Endothelial cell of umbilical vein (primary cell): ENCODE measurements at regions of chr6 and their contacts with region 1.

Region 1: DNA sequence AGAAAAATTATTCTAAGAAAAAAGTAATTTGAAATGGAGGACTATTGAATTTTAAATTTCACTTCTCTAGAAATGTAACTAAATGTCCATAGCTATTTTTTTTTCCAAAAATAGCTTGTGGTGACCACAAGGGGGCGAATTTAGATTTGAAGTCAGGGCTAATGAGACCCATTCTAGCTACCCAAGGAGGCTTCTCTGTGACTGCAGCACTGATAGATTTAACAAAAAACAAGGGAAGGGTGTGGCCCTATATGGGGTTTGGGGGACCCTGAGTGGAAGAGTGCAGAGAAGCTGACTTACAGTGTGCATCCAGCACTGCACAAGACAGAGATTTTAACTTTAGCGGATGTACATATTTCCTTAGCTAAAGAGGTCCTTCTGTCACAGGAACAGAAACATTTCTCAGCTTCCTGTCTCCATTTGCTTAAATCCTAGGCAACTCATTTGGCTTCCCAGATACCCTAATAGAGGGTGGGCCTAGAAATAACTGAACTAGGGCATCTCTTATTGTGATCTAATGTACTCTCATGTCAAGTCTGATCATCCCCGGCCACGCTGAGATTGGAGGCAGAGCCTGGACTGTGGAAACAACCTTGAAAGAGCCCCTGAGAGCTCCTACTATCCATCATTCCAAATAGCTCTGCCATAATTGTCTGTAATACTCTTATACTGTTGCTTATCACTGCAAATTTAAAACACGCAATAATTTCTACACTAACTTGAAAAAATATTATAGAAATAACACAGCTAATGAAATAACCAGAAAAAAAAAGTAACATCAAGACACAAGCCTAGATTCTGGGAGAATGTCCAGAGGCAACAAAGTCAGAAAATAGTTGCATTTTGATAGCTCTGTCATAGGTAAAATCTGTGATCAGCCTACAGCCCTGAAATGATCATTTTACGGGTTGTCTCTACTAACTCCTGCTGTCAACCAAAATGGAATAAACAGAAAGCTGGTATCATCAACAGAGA is 93.6 kb downstream of the SNAP91 start:
- DNase-seq: peak; percentile 63
- H3K4me3 ChIP-seq: no peak overlapping the region
- H3K27ac ChIP-seq: no peak overlapping the region
- H3K4me1 ChIP-seq: peaks cover 3% of the 10 kb centered on the region
- H3K27me3 ChIP-seq: no peaks in the 10 kb centered on the region
- CTCF ChIP-seq: peak; percentile 51 to 57
- POLR2A ChIP-seq: no peak

Region 2: DNA sequence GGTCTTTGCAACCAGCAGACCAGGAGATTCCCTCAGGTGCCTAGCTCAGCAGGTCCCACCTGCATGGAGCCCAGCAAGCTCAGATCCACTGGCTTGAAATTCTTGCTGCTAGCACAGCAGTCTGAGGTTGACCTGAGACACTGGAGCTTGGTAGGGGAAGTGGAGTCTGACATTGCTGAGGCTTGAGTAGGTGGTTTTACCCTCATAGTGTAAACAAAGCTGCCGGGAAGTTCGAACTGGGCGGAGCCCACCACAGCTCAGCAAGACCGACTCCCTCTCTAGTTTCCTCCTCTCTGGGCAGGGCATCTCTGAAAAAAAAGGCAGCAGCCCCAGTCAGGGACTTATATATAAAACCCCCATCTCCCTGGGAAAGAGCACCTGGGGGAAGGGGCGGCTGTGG is 68.7 kb before region 1 on chr6:
- CTCF ChIA-PET with region 1: no interaction called
- POLR2A ChIA-PET with region 1: no interaction called
- dilution Hi-C with region 1: no loop called
- intact Hi-C with region 1: no loop called
- DNase-seq: no peak
- H3K4me3 ChIP-seq: no peak overlapping the region
- H3K27ac ChIP-seq: no peak overlapping the region
- H3K4me1 ChIP-seq: no peaks in the 10 kb centered on the region
- H3K27me3 ChIP-seq: no peaks in the 10 kb centered on the region
- CTCF ChIP-seq: no peak
- POLR2A ChIP-seq: no peak

Region 3: DNA sequence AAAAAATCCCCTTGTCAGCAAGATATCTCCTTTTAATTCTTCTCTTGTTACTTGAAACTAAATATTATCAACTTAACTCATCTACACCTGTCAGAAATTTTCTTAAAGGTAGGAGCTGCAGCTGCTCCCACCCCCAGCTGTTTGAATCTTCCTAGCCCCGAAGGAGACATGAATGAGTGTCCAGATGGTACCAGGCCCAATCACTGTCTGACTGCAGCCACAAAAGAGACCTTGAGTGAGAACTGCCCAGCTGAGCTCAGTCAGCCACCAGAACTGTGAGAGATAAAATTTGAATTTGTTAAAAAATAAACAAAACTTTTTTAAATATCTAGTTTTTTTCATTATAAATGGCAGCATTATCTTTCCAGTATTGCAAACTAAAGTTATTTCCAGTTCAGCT is 18.3 kb before region 1 on chr6:
- CTCF ChIA-PET with region 1: interaction called, 33 read pairs
- POLR2A ChIA-PET with region 1: no interaction called
- dilution Hi-C with region 1: no loop called
- intact Hi-C with region 1: no loop called
- DNase-seq: no peak
- H3K4me3 ChIP-seq: no peak overlapping the region
- H3K27ac ChIP-seq: no peak overlapping the region
- H3K4me1 ChIP-seq: no peaks in the 10 kb centered on the region
- H3K27me3 ChIP-seq: no peaks in the 10 kb centered on the region
- CTCF ChIP-seq: no peak
- POLR2A ChIP-seq: no peak

Region 4: GRCh38 chr6:83696674-83697073 is 81.4 kb after region 1 on chr6:
- CTCF ChIA-PET with region 1: interaction called, 14 read pairs
- POLR2A ChIA-PET with region 1: no interaction called
- dilution Hi-C with region 1: no loop called
- intact Hi-C with region 1: no loop called
- DNase-seq: peak; percentile 93
- H3K4me3 ChIP-seq: no peak overlapping the region
- H3K27ac ChIP-seq: no peak overlapping the region
- H3K4me1 ChIP-seq: peaks cover 12% of the 10 kb centered on the region
- H3K27me3 ChIP-seq: no peaks in the 10 kb centered on the region
- CTCF ChIP-seq: no peak
- POLR2A ChIP-seq: no peak

Region 5: GRCh38 chr6:83804886-83805285 is 189.6 kb after region 1 on chr6:
- CTCF ChIA-PET with region 1: interaction called, 108 read pairs
- POLR2A ChIA-PET with region 1: no interaction called
- dilution Hi-C with region 1: no loop called
- intact Hi-C with region 1: loop called (anchors 1 kb)
- DNase-seq: peak; percentile 9
- H3K4me3 ChIP-seq: no peak overlapping the region
- H3K27ac ChIP-seq: no peak overlapping the region
- H3K4me1 ChIP-seq: no peaks in the 10 kb centered on the region
- H3K27me3 ChIP-seq: no peaks in the 10 kb centered on the region
- CTCF ChIP-seq: peak in 1 of 2 donors; percentile 4
- POLR2A ChIP-seq: no peak

Region 6: GRCh38 chr6:83859410-83860358 is 244.4 kb after region 1 on chr6 and contains the start of gene CYB5R4:
- CTCF ChIA-PET with region 1: interaction called, 18 read pairs
- POLR2A ChIA-PET with region 1: no interaction called
- dilution Hi-C with region 1: no loop called
- intact Hi-C with region 1: no loop called
- DNase-seq: peak; percentile 94
- H3K4me3 ChIP-seq: peak within 1 kb of the TSS; percentile 29 to 85 (median 79)
- H3K27ac ChIP-seq: peak within 1 kb of the TSS; percentile 36
- H3K4me1 ChIP-seq: peaks cover 8% of the 10 kb centered on the region
- H3K27me3 ChIP-seq: peaks cover 3 to 13% of the 10 kb centered on the region in 2 experiments
- CTCF ChIP-seq: peak; percentile 46 to 76
- POLR2A ChIP-seq: peak; percentile 75
- total RNA-seq, gene CYB5R4: 13.4 TPM in 2 replicates

Region 7: DNA sequence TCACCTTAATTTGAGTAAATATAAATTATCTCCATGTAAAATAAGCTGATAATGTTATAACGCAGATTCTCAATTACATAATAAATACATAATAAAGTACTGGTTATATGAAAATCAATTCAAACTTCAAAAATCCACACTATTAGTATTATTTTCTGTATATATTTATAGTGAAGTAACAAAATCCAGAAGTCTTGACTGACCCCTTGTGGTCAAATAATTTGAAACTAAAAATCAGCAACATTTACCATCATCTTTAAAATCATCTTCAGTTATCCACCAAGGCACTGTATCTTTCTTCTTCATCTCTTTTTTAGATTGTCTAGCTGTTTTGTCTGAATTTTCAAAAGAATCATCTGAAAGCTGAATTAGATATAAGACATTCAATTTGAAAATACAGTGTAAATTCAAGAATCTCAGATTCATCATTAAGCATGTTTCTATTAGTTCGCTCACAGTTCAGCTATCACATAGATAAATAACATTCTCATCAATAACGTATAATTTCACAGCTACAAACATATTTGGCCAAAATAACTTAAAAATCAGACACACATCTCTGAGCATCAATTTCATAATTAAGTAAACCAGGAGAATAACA is 605.6 kb after region 1 on chr6:
- CTCF ChIA-PET with region 1: interaction called, 45 read pairs
- POLR2A ChIA-PET with region 1: no interaction called
- dilution Hi-C with region 1: no loop called
- intact Hi-C with region 1: loop called (anchors 1 kb)
- DNase-seq: peak; percentile 55
- H3K4me3 ChIP-seq: no peak overlapping the region
- H3K27ac ChIP-seq: no peak overlapping the region
- H3K4me1 ChIP-seq: no peaks in the 10 kb centered on the region
- H3K27me3 ChIP-seq: no peaks in the 10 kb centered on the region
- CTCF ChIP-seq: peak in 1 of 2 donors; percentile 12
- POLR2A ChIP-seq: no peak